ENCODE measurements at regions of chr11 and their contacts with region 1.

Region 1: DNA sequence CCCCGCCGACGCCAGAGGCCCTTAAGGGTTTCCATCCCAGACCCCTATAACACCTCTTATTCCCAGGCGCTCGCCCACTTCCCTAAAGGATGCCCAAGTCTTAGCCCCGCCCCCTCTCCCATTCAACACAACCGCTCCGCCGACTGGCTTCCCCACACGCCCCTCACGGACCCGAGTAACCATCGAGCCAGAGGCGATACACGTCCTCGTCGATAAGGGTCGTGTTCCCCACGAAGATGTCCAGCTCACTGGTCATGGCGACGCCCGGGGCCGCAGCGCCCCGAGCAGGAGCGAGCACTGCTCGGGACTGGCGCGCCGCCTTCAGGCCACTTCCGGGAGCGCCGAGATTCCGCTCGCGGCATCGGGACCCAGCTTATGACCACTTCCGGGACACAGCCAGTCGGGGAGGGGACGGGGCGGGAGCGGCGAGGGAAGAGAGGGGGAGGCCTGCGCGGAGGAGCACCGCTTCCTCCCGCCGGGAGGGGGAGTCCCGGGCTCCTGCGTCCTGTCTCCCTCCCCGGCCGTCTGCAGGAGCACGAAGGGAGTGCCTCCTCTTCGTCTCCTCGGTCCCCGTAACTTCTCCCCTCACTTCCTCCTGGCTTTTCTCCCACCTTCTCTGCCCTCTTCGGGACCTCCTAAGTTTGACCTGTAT is at the start of gene FIBP:
- DNase-seq: peak; percentile 94
- H3K4me3 ChIP-seq: peak within 1 kb of the TSS; percentile 90
- H3K27ac ChIP-seq: peak within 1 kb of the TSS; percentile 98
- H3K27me3 ChIP-seq: no peaks in the 10 kb centered on the region
- CTCF ChIP-seq: peak; percentile 74
- polyA plus RNA-seq, gene FIBP: 126 and 160 TPM in 2 replicates

Region 2: DNA sequence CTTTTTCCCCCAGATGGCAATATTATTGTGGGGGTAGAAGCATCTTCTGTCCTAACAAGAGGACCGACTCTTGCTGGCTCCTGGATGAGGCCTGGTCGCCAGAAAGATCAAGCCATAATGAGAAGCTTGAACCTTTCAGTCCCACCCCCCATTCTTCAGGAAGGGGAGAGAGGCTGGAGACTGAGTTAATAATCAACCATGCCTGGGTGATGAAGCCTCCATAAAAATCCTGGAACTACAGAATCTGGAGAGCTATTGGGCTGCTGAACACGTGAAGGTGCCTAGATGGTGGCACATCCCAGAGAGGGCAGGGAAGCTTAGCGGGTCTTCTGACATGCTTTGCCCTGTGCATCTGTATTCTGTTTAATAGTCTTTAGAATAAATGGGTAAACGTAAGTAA is 123.9 kb before region 1 on chr11:
- CTCF ChIA-PET with region 1: no interaction called
- POLR2A ChIA-PET with region 1: no interaction called
- DNase-seq: no peak
- H3K4me3 ChIP-seq: no peak overlapping the region
- H3K27ac ChIP-seq: no peak overlapping the region
- H3K27me3 ChIP-seq: no peaks in the 10 kb centered on the region
- CTCF ChIP-seq: no peak

Region 3: DNA sequence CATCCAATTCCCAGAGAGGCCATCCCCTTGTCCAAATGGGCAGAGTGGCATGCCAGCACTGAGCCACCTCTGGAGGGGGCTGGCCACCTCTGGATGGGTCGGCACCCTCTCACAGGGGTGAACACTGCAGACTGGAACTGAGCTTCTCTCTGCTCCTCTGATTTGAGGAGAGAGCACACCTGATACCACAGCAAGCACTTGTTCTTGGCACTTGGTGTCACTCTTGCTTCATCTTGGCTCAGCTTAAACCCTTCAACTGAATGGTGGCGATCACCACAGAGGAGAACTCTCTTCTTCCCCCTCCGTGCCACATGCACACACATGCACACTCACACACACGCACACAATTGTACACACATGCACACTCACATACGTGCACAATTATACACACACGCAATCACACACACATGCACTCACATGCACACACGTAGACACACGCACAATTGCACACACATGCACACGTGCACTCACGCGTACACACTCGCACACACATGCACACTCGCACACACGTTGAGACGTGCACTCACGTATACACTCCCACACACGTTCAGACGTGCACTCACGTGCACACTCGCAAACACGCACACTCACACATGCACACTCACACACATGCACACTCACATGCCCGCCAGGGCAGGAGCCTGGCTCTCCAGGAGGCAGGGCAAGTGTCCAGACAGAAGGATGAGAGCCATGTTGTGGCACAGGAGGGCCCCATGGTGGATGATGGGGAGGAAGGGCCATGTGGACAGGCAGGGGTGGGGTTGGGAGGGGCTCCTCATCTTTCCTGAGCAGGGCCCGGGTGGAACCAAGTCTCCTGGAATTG is 78.0 kb before region 1 on chr11:
- CTCF ChIA-PET with region 1: no interaction called
- POLR2A ChIA-PET with region 1: no interaction called
- DNase-seq: no peak
- H3K4me3 ChIP-seq: no peak overlapping the region
- H3K27ac ChIP-seq: no peak overlapping the region
- H3K27me3 ChIP-seq: peaks cover 43% of the 10 kb centered on the region
- CTCF ChIP-seq: no peak

Region 4: DNA sequence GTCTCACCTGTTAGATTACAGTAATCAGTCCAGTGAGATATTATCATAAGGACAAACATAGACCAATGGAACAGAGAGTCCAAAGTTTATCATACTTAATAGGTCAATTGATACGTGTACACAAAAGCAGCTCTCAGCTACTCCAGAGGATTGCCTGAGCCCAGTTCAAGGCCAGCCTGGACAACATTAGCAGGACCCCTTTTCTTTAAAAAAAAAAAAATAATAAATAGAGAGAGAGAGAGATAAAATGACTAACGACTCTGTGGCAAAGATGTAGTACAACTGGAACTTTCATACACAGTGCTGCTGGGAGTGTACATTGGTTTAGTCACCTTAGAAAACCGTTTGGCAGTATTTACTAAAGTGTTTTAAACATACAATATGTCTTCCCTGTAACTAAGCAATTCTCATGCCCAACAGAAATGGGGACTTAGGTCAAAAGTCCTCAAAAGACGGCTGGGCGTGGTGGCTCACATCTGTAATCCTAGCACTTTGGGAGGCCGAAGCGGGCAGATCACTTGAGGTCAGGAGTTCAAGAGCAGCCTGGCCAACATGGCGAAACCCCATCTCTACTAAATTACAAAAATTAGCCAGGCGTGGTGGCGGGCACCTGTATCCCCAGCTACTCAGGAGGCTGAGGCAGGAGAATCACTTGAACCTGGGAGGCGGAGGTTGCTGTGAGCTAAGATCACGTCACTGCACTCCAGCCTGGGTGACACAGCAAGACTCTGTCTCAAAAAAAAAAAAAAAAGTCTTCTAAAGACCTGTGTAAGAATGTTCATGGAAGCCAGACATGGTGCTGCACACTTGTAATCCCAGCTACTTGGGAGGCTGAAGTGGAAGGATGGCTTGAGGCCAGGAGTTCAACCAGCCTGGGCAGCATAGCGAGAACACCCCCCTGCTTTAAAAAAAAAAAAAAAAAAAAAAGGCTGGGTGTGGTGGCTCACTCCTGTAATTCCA is 43.8 kb before region 1 on chr11:
- CTCF ChIA-PET with region 1: interaction called, 9 read pairs
- POLR2A ChIA-PET with region 1: interaction called, 16 read pairs
- DNase-seq: no peak
- H3K4me3 ChIP-seq: no peak overlapping the region
- H3K27ac ChIP-seq: no peak overlapping the region
- H3K27me3 ChIP-seq: no peaks in the 10 kb centered on the region
- CTCF ChIP-seq: no peak

Region 5: GRCh38 chr11:65873318-65874156 is 14.8 kb before region 1 on chr11:
- CTCF ChIA-PET with region 1: interaction called, 51 read pairs
- POLR2A ChIA-PET with region 1: interaction called, 17 read pairs
- DNase-seq: peak; percentile 78
- H3K4me3 ChIP-seq: peak overlapping the region; percentile 76
- H3K27ac ChIP-seq: peak overlapping the region; percentile 68
- H3K27me3 ChIP-seq: no peaks in the 10 kb centered on the region
- CTCF ChIP-seq: no peak

Region 6: DNA sequence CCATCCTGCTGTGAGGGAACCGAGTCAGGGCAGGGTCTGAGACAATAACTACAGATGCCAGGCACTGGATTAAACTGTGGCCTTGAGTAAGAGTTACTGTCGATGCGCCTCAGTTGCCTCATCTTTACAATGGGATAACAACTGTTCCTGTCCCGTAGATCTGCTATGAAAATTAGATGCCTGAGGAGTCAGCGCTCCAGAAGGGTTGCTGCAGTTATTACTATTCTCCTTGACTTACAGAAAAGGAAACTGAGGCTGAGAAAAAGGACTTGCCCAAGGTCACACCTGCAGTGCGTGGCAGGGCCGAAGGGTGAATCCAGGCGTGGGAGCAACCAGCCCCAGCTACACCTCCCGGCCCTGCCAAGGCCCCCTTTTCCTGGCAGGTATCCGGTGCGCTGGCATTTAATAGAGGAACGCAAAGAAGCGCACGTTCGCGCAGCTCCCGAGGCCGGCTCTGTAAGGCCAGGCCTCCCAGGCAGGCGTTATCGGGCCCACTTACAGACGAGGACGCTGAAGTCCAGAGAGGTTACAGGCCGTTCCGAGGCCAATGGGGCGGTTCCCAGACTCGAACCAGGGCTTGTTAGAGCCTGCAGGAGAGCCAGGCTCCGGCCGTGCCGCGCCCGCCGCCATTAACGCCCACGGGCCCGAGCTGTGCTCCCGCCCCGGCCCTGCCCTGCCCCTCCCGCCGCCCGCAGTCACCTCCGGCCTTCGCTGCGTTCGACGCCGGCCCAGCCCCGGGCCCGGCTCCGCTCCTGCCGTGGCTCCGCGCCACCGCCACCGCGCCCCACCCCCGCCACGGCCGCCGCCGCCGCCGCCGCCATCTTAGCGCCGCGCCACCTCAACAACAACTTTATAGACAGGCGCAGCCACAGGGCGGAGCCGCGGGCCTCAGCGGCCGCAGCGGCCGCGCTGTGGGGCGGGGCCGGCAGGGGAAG is 30.2 kb after region 1 on chr11 and contains the start of gene C11orf68:
- CTCF ChIA-PET with region 1: interaction called, 15 read pairs
- POLR2A ChIA-PET with region 1: interaction called, 124 read pairs
- DNase-seq: no peak
- H3K4me3 ChIP-seq: peak within 1 kb of the TSS; percentile 94
- H3K27ac ChIP-seq: peak within 1 kb of the TSS; percentile 93
- H3K27me3 ChIP-seq: no peaks in the 10 kb centered on the region
- CTCF ChIP-seq: no peak
- polyA plus RNA-seq, gene C11orf68: 32.9 and 52.2 TPM in 2 replicates

Region 7: DNA sequence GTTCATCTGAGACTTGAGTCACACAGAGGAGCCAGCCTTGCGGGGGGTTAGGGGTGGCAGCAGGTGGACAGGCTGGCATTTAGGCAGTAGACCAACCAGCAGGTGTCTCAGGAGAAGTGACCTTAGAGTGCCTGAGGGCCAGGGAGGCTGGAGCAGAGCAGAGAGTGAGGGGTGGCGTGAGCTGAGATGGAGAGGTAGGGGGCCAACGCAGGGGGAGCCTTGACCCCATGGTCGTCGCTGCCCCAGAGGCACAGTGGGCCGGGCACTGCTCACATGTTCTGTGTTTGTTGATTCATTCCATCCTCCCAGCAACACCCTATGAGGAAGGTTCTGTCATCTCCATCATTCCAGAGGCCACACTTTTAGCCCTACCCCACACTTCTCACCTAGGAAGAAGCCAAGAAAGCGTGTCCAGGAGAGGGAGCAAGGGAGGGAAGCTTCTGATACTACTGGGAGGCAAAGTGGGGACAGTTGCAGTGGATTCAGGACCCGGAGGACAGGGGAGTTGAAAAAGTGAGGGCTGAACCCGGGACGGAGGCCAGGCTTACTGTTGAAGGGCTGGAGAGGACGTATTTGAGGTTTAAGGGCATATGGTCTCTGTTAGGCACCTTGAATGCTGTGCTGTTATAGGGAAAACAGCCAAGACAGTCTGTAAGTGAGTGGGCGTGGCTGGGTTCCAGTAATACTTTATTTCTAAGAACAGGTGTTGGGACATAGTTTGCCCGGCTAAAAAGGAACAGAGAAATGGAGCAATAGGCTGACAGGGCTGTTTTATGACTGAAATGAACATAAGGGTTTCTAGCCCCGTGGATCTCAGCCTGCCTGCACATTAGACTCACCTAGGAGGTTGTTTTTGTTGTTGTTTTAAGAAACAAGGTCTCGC is 80.6 kb after region 1 on chr11:
- CTCF ChIA-PET with region 1: interaction called, 13 read pairs
- POLR2A ChIA-PET with region 1: interaction called, 4 read pairs
- DNase-seq: no peak
- H3K4me3 ChIP-seq: no peak overlapping the region
- H3K27ac ChIP-seq: no peak overlapping the region
- H3K27me3 ChIP-seq: no peaks in the 10 kb centered on the region
- CTCF ChIP-seq: no peak

Region 8: GRCh38 chr11:65988791-65989592 is 100.7 kb after region 1 on chr11:
- CTCF ChIA-PET with region 1: interaction called, 157 read pairs
- POLR2A ChIA-PET with region 1: interaction called, 7 read pairs
- DNase-seq: peak; percentile 92
- H3K4me3 ChIP-seq: no peak overlapping the region
- H3K27ac ChIP-seq: no peak overlapping the region
- H3K27me3 ChIP-seq: no peaks in the 10 kb centered on the region
- CTCF ChIP-seq: peak; percentile 97

Region 9: DNA sequence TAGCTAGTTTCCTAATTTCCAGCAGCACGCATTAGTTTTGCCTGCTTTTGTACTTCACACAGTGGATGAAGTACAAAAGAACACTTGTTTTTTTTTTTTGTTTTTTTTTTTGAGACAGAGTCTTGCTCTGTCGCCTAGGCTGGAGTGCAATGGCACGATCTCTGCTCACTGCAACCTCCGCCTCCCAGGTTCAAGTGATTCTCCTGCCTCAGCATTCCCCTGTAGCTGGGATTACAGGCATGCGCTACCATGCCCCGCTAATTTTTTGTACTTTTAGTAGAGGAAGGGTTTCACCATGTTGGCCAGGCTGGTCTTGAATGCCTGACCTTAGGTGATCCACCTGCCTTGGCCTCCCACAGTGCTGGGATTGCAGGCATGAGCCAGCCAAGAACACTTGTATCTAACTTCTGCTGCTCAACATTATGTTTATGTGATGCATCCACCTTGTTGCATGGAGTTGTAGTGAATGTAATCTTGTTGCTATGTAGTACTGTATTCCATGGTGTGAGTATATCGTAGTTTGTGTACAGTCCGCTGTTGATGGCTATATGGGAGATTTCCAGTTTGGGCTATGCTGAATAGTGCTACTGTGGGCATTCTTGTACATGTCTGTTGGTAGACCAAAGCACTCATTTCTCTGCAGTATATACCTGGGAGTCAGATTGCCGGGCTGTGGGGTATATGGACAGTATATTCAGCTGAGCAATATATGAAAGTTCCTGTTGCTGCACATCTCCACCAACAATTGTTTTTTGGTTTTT is 199.0 kb after region 1 on chr11:
- CTCF ChIA-PET with region 1: no interaction called
- POLR2A ChIA-PET with region 1: no interaction called
- DNase-seq: no peak
- H3K4me3 ChIP-seq: no peak overlapping the region
- H3K27ac ChIP-seq: no peak overlapping the region
- H3K27me3 ChIP-seq: no peaks in the 10 kb centered on the region
- CTCF ChIP-seq: no peak

Region 10: DNA sequence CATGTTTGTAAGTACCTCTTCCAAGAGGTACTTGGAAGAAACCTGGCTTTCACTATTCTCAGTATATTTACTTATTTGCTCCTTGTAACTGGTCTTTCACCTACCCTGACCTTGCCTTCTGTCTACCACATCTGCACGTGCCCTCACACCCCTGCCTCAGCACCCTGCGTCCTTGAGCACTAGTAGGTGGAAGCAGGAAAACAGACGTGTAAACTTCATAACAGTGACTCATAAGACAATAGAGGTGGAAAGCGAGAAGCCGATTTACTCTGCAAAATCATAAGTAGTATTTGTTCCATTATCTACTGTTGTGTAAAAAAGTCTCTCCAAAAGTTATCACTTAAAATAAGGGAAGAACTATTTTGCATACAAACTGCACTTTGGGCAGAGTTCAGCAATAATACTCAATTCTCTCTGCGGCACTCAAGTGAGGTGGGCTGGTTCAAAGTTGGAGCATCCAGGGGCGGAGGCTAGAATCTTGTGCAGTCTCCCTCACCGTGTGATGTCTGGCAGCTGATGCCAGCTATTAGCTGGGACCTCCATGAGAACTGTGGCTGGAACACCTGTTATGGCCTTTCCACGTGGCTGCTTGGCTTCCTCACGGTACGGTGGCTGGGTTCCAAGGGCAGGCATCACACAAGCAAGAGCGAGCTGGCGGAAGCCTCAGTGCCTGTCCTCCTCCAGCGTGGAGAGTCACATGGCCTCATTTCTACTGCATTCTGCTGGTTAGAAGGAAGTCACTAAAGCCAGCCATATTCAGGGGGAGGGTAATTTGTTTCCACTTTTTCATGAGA is 212.2 kb after region 1 on chr11:
- CTCF ChIA-PET with region 1: no interaction called
- POLR2A ChIA-PET with region 1: no interaction called
- DNase-seq: no peak
- H3K4me3 ChIP-seq: no peak overlapping the region
- H3K27ac ChIP-seq: no peak overlapping the region
- H3K27me3 ChIP-seq: no peaks in the 10 kb centered on the region
- CTCF ChIP-seq: no peak